Mammary epithelial cell (primary cell): ENCODE measurements at regions of chr4 and their contacts with region 1.

Region 1: GRCh38 chr4:95124906-95125504 is 367.2 kb downstream of the BMPR1B start:
- DNase-seq: peak; percentile 52
- H3K4me3 ChIP-seq: no peak overlapping the region
- H3K27ac ChIP-seq: no peak overlapping the region
- H3K4me1 ChIP-seq: peaks cover 9% of the 10 kb centered on the region
- H3K27me3 ChIP-seq: no peaks in the 10 kb centered on the region
- CTCF ChIP-seq: peak; percentile 48 to 69

Region 2: DNA sequence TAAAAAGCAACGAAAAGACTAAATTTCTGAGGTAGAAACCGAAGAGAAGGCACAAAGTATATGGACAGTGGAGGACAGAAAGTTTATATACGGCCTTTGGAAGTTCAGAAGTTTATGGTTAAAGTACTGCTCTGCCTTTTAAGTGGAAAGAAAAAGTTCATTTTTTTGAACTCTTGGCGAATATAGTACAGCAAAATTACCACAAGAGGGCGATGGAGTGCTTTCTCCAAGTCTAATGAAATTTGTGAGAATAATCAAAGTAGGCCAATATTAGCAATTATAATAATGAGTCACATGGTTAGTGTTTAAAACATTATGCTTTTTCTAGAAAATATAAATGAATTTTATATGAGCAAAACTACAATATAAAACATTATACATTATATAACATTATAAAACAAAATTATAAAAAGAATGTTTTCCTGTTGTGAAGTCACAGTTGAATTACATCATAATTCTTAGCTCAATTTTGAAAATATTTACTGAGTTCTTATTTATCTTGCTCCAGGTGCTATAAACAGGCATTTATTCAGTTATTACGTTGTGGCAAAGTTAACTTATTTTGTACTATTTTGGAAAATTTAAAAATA is 503.4 kb before region 1 on chr4:
- CTCF ChIA-PET with region 1: no interaction called
- dilution Hi-C with region 1: no loop called
- in situ Hi-C with region 1: loop called in 1 of 2 experiments (anchors 25 kb)
- intact Hi-C with region 1: loop called (anchors 1 kb)
- DNase-seq: peak; percentile 9
- H3K4me3 ChIP-seq: no peak overlapping the region
- H3K27ac ChIP-seq: no peak overlapping the region
- H3K4me1 ChIP-seq: no peaks in the 10 kb centered on the region
- H3K27me3 ChIP-seq: no peaks in the 10 kb centered on the region
- CTCF ChIP-seq: peak; percentile 62 to 74

Region 3: DNA sequence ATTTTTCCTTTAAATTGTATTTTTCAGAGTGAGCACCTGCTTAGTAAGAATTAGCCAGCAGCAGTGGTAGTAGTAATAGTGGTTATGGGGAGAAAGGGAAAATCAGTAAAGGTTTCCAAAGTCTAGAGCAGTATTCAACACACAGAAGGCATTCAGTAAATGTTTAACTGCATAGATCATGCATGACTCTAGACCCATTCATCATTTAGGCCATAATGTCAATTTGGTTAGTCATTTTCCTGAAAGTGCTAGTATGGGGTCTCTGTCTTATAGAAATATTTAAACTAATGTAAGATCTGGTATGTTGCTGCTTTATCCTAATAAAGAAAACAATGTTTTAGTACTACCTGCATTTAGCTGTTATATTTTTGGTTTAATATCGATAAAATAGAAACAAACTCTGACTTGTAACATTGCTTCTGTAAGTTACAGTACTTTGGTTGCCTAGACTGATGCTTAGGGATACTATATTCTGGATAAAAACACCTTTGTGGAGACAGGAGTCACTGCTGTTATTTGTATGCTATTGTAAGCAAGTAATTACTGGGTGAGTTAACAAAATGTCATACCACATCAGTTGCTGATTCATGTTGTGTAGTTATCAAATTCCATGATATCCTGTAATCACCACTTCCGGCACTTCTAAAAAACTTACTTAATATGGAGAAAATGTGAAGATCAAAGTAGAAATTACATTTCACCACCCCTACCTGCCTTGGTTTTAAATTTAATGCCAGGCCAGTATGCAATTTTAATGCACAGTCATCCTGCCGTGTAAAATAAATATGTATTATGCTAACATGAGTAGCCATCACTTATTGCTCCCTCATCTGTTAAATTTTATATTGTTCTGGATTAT is 483.1 kb before region 1 on chr4:
- CTCF ChIA-PET with region 1: no interaction called
- dilution Hi-C with region 1: no loop called
- in situ Hi-C with region 1: loop called in 1 of 2 experiments (anchors 25 kb)
- intact Hi-C with region 1: no loop called
- DNase-seq: peak; percentile 60
- H3K4me3 ChIP-seq: no peak overlapping the region
- H3K27ac ChIP-seq: peak overlapping the region; percentile 54
- H3K4me1 ChIP-seq: peaks cover 15% of the 10 kb centered on the region
- H3K27me3 ChIP-seq: no peaks in the 10 kb centered on the region
- CTCF ChIP-seq: no peak